Prostate gland (tissue), 2 donors: ENCODE measurements at regions of chr18 and their contacts with region 1.

Region 1: GRCh38 chr18:23237524-23238151 is 102.4 kb downstream of the CABLES1 start:
- DNase-seq: peak; percentile 12
- H3K4me3 ChIP-seq: peak overlapping the region; percentile 9 to 15
- H3K27ac ChIP-seq: peak overlapping the region; percentile 74 to 79
- H3K4me1 ChIP-seq: peaks cover 3% of the 10 kb centered on the region
- H3K27me3 ChIP-seq: no peaks in the 10 kb centered on the region
- CTCF ChIP-seq: peak in 1 of 4 experiments; percentile 27
- POLR2A ChIP-seq: no peak

Region 2: DNA sequence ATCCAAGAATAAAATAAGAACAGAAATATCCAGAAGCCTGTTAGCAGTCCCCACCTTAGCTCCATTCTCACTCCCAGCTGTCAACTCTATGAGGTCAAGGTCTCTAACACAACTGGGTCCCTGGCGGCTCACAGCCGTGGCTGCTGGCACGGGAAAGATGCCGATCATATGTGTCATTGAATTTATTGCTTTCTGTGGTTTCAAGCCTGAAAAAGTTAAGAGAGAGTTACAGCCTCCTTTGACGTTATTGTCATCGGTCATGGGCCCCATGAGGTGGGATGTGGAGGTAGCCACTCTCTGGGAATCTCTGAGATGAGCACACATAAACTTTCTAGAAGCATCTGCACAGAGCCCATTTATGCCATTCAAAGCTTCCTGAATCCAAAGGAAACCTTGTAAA is 131.1 kb before region 1 on chr18:
- intact Hi-C with region 1: no loop called
- DNase-seq: peak; percentile 17
- H3K4me3 ChIP-seq: no peak overlapping the region
- H3K27ac ChIP-seq: no peak overlapping the region
- H3K4me1 ChIP-seq: no peaks in the 10 kb centered on the region
- H3K27me3 ChIP-seq: no peaks in the 10 kb centered on the region
- CTCF ChIP-seq: peak in 1 of 4 experiments; percentile 10
- POLR2A ChIP-seq: no peak

Region 3: DNA sequence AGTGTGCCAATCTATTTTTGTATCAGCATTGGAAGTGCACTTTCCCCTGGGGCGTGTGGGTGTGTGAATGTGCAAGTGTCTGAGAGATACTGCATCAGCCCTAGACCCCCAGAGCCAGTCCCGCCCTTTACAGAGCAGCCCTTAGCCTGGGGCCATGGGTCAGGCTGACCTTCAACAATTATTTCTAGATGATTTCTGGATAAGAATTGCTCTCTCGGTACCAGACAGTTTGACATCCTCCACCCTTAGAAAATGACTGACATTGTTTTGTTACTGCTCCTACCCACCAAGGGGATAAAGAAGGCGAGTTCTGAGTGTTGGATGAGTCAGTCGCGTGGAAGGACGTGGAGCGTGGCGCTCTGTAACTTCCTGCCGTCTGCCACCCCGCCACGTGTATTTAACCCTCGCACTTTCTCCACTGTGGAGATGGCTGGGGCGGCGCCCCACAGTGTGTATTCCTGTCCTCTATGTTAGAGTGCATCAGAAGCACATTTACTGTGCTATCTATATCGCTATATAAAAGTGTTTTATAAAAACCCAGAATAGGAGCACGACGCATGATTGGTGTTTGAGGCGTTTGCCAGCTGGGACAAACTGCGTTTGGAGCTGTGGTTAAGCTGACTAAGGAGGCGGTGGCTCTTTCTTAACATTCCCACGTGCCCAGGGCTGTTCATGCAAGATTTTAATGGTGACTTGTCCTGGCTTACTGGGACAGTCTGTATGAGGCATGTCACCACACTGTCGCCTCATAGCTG is 20.4 kb after region 1 on chr18:
- intact Hi-C with region 1: loop called (anchors 2 kb)
- DNase-seq: no peak
- H3K4me3 ChIP-seq: no peak overlapping the region
- H3K27ac ChIP-seq: no peak overlapping the region
- H3K4me1 ChIP-seq: peaks cover 8% of the 10 kb centered on the region
- H3K27me3 ChIP-seq: no peaks in the 10 kb centered on the region
- CTCF ChIP-seq: no peak
- POLR2A ChIP-seq: no peak

Region 4: DNA sequence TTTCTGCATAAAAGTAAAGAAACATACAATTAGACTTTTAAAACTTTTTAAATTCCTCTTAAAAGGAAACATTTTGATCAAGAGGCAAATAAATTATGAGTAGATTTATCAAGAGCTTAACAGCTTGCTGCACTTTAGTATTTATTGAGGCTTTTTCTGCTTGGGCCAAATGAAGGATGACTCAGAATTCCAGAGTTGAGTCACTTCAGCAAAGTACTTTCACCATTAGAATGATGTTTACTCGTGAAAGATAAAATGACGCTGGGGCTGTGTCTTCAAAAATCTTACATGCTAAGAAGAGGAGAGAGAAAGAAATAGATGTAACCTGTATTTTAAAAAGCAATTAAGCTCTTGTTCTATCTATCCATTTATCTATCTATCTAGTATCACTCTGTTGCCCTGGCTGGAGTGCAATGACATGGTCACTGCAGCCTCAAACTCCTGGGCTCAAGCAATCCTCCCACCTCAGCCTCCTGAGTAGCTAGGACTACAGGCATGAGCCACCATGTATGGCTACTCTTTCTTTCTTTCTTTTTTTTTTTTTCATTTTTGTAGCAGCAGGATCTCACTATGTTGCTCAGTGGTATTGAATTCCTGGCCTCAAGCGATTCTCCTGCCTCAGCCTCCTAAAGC is 140.1 kb after region 1 on chr18:
- intact Hi-C with region 1: loop called (anchors 5 kb)
- DNase-seq: no peak
- H3K4me3 ChIP-seq: no peak overlapping the region
- H3K27ac ChIP-seq: peak overlapping the region in 1 of 2 donors; percentile 9
- H3K4me1 ChIP-seq: no peaks in the 10 kb centered on the region
- H3K27me3 ChIP-seq: no peaks in the 10 kb centered on the region
- CTCF ChIP-seq: no peak
- POLR2A ChIP-seq: no peak